Gastrocnemius medialis (tissue), 4 donors: ENCODE measurements at regions of chrX and their contacts with region 1.

Region 1: GRCh38 chrX:134969726-134970125 is 21.1 kb upstream of the SMIM10 start:
- DNase-seq: no peak
- ATAC-seq: no peak
- H3K4me3 ChIP-seq: no peak overlapping the region
- H3K27ac ChIP-seq: no peak overlapping the region
- H3K4me1 ChIP-seq: no peaks in the 10 kb centered on the region
- H3K27me3 ChIP-seq: no peaks in the 10 kb centered on the region
- CTCF ChIP-seq: no peak
- POLR2A ChIP-seq: no peak

Region 2: GRCh38 chrX:134734466-134734952 is 235.2 kb before region 1 on chrX:
- in situ Hi-C with region 1: no loop called
- intact Hi-C with region 1: no loop called
- DNase-seq: no peak
- ATAC-seq: no peak
- H3K4me3 ChIP-seq: no peak overlapping the region
- H3K27ac ChIP-seq: no peak overlapping the region
- H3K4me1 ChIP-seq: peaks cover 0 to 3% of the 10 kb centered on the region in 2 donors
- H3K27me3 ChIP-seq: no peaks in the 10 kb centered on the region
- CTCF ChIP-seq: no peak
- POLR2A ChIP-seq: no peak

Region 3: GRCh38 chrX:134782796-134783195 is 186.9 kb before region 1 on chrX:
- in situ Hi-C with region 1: no loop called
- intact Hi-C with region 1: no loop called
- DNase-seq: no peak
- ATAC-seq: no peak
- H3K4me3 ChIP-seq: no peak overlapping the region
- H3K27ac ChIP-seq: no peak overlapping the region
- H3K4me1 ChIP-seq: no peaks in the 10 kb centered on the region
- H3K27me3 ChIP-seq: no peaks in the 10 kb centered on the region
- CTCF ChIP-seq: peak in 3 of 5 experiments; percentile 16 to 47 (median 27)
- POLR2A ChIP-seq: no peak

Region 4: DNA sequence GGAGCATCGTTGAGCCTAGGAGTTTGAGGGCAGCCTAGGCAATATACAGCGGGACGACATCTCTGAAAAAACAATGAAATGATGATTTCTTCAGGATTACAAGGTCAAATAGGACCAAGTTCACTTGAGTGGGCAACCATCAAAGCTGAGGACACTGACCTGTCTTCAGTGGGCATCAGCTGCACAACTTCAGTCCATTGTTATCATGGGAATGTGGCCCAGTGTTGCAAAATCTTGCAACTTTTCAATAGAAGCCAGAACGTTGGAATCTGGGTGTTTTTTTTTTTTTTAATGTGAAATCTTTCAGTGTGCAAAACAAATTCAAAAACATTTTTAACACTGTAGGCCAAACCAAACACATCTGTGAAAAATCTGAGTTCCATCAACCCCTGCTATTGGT is 156.0 kb before region 1 on chrX:
- in situ Hi-C with region 1: no loop called
- intact Hi-C with region 1: no loop called
- DNase-seq: no peak
- ATAC-seq: no peak
- H3K4me3 ChIP-seq: no peak overlapping the region
- H3K27ac ChIP-seq: no peak overlapping the region
- H3K4me1 ChIP-seq: no peaks in the 10 kb centered on the region
- H3K27me3 ChIP-seq: no peaks in the 10 kb centered on the region
- CTCF ChIP-seq: no peak
- POLR2A ChIP-seq: no peak

Region 5: DNA sequence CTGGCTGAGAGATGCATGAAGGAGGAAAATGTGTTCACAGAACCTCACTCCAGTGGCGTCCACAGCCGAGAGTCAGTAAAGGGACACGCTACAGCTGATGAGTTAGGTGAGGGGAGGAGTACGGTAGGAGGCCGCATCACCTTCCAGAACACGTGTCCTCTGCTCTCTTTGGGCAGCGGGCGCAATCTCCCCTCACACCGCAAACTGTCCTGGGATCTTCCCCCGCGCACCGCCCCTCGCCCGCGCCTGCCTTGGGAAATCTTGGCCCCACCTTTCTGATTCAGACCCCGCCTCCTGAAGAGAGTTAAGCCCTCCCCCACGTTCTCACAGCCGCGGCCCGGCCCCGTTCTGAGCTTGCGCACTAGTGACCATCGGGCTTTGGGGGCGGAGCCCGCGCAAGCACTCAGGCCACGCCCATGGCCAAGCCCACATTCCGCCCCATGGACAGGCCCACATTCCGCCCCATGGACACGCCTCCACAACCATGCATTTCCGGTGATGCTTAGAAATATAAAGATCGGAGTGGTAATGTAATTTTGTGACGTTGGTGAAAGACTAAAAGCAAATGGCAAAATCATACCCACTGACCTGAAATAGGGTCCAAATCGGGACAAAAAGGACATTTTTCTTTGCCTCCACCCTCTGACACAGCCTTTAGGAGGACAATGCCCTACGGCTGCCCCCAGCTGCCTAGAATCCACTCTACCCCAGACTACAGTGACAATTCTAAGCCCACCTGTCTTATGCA is 34.3 kb after region 1 on chrX:
- in situ Hi-C with region 1: loop called in 1 of 4 experiments (anchors 5 kb)
- intact Hi-C with region 1: loop called (anchors 1 kb)
- DNase-seq: peak; percentile 66 to 84
- ATAC-seq: peak; percentile 96 to 98
- H3K4me3 ChIP-seq: peak overlapping the region; percentile 48 to 65 (median 54)
- H3K27ac ChIP-seq: peak overlapping the region; percentile 26 to 63 (median 55)
- H3K4me1 ChIP-seq: peaks cover 0 to 3% of the 10 kb centered on the region in 2 donors
- H3K27me3 ChIP-seq: no peaks in the 10 kb centered on the region
- CTCF ChIP-seq: no peak
- POLR2A ChIP-seq: no peak

Region 6: DNA sequence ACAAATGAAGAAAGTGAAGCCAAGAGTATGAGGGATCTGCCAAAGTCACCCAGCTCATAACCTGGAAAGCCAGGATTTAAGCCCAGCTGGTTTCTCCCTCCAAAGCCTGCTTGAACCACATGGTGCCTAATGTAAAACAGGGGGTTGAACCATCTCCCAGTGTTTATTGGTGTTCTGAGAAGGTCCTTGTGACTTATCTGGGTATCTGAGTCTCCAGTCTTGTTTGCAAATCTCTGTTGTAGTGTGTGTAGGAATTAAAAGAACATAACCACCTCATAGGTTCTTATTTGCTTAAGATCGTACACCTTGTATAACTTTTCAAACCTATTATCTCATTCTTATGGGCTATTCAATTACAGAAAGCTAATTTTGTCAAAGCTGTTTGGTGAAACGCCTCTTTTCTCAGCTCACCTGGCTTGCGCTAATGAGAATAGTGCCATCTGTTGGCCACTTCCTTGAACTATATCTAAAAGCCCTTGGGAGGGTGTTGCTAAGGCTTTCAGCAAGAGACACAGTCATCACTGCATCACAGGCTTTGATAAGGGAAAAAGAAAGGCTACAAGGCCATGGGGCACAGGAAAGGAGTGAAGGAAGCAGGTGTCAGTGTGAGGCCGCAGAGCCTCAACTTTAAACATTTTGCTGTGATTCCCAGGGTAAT is 116.6 kb after region 1 on chrX:
- in situ Hi-C with region 1: no loop called
- intact Hi-C with region 1: loop called (anchors 1 kb)
- DNase-seq: no peak
- ATAC-seq: peak; percentile 62 to 86
- H3K4me3 ChIP-seq: no peak overlapping the region
- H3K27ac ChIP-seq: no peak overlapping the region
- H3K4me1 ChIP-seq: no peaks in the 10 kb centered on the region
- H3K27me3 ChIP-seq: no peaks in the 10 kb centered on the region
- CTCF ChIP-seq: peak in 4 of 5 experiments; percentile 38 to 57 (median 46)
- POLR2A ChIP-seq: no peak

Region 7: GRCh38 chrX:135213200-135213844 is 243.6 kb after region 1 on chrX:
- in situ Hi-C with region 1: loop called in 1 of 4 experiments (anchors 25 kb)
- intact Hi-C with region 1: no loop called
- DNase-seq: no peak
- ATAC-seq: no peak
- H3K4me3 ChIP-seq: no peak overlapping the region
- H3K27ac ChIP-seq: no peak overlapping the region
- H3K4me1 ChIP-seq: no peaks in the 10 kb centered on the region
- H3K27me3 ChIP-seq: no peaks in the 10 kb centered on the region
- CTCF ChIP-seq: no peak
- POLR2A ChIP-seq: no peak